CD14-positive monocyte (primary cell): ENCODE measurements at regions of chr12 and their contacts with region 1.

Region 1: GRCh38 chr12:48350249-48351021 is at the start of gene ZNF641:
- DNase-seq: peak; percentile 51 to 74 (median 73)
- H3K4me3 ChIP-seq: peak within 1 kb of the TSS; percentile 90 to 97 (median 91)
- H3K4me3 Mint-ChIP-seq: peak within 1 kb of the TSS; percentile 97 to 98
- H3K27ac ChIP-seq: peak within 1 kb of the TSS; percentile 92 to 93
- H3K27ac Mint-ChIP-seq: peak within 1 kb of the TSS; percentile 94 to 97 (median 96)
- H3K4me1 ChIP-seq: peaks cover 18 to 22% of the 10 kb centered on the region in 2 donors
- H3K4me1 Mint-ChIP-seq: peaks cover 36% of the 10 kb centered on the region
- H3K27me3 ChIP-seq: no peaks in the 10 kb centered on the region
- H3K27me3 Mint-ChIP-seq: peaks cover 0 to 3% (median 0%) of the 10 kb centered on the region in 3 donors
- CTCF ChIP-seq: no peak
- polyA plus RNA-seq, gene ZNF641: 12.1 to 21.7 (median 12.6) TPM

Region 2: GRCh38 chr12:48197971-48198671 is 152.3 kb before region 1 on chr12:
- intact Hi-C with region 1: loop called (anchors 5 kb)
- DNase-seq: peak; percentile 94 to 97 (median 95)
- H3K4me3 ChIP-seq: peak overlapping the region; percentile 78 to 89 (median 79)
- H3K4me3 Mint-ChIP-seq: peak overlapping the region; percentile 92 to 96
- H3K27ac ChIP-seq: peak overlapping the region; percentile 89 to 98
- H3K27ac Mint-ChIP-seq: peak overlapping the region; percentile 97 to 99 (median 98)
- H3K4me1 ChIP-seq: peaks cover 38 to 47% of the 10 kb centered on the region in 2 donors
- H3K4me1 Mint-ChIP-seq: peaks cover 48% of the 10 kb centered on the region
- H3K27me3 ChIP-seq: peaks cover 0 to 15% of the 10 kb centered on the region in 2 donors
- H3K27me3 Mint-ChIP-seq: peaks cover 0 to 14% (median 4%) of the 10 kb centered on the region in 3 donors
- CTCF ChIP-seq: no peak

Region 3: DNA sequence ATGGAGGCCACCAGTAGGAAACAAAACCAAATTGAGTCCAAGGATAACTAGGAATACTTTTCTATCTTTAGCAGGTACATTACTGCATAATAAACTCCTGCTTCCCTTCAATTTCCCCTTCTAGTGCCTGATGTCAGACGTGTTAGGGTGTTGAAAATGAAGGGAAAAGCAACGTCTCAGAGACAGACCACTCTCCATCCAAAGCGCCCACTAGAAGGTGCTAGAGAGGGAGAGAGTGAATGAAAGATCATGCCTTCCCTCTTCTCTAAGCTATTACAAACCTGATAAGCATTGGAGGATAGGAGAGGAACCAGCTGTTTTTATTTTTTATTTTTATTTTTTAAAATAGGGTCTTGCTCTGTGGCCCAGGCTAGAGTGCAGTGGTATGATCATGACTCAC is 63.8 kb before region 1 on chr12:
- intact Hi-C with region 1: loop called in 1 of 2 experiments (anchors 10 kb)
- DNase-seq: peak in 2 of 3 donors; percentile 11 to 16
- H3K4me3 ChIP-seq: no peak overlapping the region
- H3K4me3 Mint-ChIP-seq: no peak overlapping the region
- H3K27ac ChIP-seq: peak overlapping the region in 1 of 2 donors; percentile 43
- H3K27ac Mint-ChIP-seq: peak overlapping the region in 5 of 7 donors; percentile 75 to 92 (median 86)
- H3K4me1 ChIP-seq: peaks cover 49 to 53% of the 10 kb centered on the region in 2 donors
- H3K4me1 Mint-ChIP-seq: peaks cover 53% of the 10 kb centered on the region
- H3K27me3 ChIP-seq: no peaks in the 10 kb centered on the region
- H3K27me3 Mint-ChIP-seq: peaks cover 2 to 4% (median 3%) of the 10 kb centered on the region in 3 donors
- CTCF ChIP-seq: peak; percentile 55

Region 4: DNA sequence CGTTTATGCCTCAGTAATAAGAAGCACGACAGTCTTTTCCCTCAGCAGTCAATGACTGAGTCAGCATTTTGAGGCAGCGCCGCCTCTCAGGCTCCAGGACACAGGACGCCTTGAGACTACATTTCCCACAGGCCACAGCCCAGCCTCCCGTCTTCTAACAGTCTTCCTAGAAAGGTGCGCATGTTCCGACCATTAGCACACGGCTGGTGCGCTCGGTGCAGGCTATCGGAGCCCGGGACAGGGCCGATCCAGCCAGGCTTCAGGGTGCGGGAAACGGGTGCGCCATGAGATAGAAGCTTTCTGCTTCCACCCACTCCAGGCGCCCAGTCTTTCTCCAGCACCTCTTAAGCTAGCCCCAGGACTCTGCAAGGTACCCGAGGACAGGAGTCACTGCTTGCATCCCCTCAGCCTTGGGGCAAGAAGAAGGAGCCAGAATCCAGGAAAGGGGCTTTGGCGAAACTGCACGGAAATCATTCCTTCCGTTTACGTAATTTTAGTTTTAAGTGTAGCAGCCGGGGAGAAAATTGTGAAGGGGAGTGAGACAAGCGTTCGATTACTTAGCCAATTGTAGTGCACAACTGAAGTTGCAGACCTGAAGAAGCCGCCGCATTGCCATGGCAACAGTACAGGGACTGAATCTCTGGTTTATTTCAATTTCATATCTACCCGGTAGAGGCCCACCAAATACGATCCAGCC is 53.7 kb before region 1 on chr12:
- intact Hi-C with region 1: no loop called
- DNase-seq: peak; percentile 25 to 35 (median 28)
- H3K4me3 ChIP-seq: peak overlapping the region; percentile 50 to 77 (median 52)
- H3K4me3 Mint-ChIP-seq: peak overlapping the region; percentile 89 to 97
- H3K27ac ChIP-seq: peak overlapping the region in 1 of 2 donors; percentile 34
- H3K27ac Mint-ChIP-seq: peak overlapping the region; percentile 8 to 82 (median 45)
- H3K4me1 ChIP-seq: peaks cover 8 to 16% of the 10 kb centered on the region in 2 donors
- H3K4me1 Mint-ChIP-seq: peaks cover 21% of the 10 kb centered on the region
- H3K27me3 ChIP-seq: no peaks in the 10 kb centered on the region
- H3K27me3 Mint-ChIP-seq: peaks cover 0 to 4% (median 3%) of the 10 kb centered on the region in 3 donors
- CTCF ChIP-seq: no peak